GM10248 (cell line): ENCODE measurements at regions of chr10 and their contacts with region 1.

Region 1: DNA sequence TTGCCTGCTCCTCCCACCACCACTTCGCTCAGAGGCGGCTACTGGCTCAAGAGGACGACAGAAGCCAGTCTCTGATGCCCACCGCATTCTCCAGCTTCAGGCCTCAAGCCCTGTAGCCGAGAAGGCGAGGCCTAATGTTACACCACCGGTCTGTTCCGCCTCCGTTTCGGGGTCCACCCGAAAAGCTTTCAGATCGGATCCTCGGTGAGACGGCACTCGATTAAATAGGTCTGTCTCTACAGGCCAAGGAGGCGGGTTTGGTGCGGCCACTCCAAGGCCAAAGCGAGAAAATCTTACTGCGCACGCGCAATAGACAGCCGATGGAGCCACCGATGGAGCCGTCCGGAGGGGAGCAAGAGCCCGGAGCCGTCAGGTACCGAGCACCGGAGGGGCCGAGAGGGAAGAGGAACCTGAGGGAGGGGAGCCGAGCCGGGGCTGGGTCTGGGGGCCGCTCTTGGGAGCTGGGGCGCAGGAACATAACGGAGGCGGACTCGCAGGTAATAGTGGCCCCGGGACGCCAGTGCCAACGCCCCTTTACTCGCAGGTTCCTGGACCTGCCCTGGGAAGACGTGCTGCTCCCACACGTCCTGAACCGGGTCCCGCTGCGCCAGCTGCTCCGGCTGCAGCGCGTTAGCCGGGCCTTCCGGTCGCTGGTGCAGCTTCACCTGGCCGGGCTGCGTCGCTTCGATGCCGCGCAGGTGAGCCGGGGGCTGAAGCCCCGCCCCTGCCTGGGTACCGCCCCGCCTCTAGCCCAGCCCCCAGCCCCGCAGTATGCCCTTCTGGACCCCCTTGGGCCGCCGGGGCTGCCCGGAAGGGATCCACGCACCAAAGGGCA is at the start of gene FBXL15:
- DNase-seq: peak; percentile 96
- CTCF ChIP-seq: no peak

Region 2: GRCh38 chr10:102384053-102384452 is 37.0 kb before region 1 on chr10:
- CTCF ChIA-PET with region 1: interaction called, 18 read pairs
- POLR2A ChIA-PET with region 1: no interaction called
- DNase-seq: no peak
- CTCF ChIP-seq: no peak

Region 3: DNA sequence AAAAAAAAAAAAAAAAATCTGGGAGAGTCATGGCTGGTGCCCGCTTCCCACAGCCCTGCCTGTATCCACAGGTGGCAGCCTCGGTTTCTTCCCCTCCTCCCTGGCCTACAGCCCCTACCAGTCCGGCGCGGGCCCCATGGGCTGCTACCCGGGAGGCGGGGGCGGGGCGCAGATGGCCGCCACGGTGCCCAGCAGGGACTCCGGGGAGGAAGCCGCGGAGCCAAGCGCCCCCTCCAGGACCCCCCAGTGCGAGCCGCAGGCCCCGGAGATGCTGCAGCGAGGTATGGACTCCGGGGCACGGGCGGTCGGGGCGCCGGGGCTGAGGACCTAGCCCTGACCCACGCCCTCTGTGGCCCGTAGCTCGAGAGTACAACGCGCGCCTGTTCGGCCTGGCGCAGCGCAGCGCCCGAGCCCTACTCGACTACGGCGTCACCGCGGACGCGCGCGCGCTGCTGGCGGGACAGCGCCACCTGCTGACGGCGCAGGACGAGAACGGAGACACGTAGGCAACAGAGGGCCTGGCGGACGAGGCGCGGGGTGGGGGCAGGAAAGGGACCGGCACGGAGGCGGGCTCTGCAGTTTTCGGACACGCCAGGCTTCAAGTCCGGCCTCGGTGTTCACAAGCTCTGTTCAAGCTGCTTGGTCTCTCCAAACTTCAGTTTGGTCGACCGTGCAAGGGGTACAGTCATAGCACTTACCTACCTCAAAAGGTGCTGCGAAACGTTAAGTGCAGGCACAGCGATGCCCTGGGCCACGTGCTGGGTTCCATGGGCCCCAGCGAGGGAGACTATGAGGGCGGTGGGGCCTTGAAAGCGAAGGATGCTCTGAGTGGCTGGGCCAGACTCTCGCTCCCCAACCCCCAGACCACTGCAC is 21.6 kb before region 1 on chr10:
- CTCF ChIA-PET with region 1: interaction called, 140 read pairs
- POLR2A ChIA-PET with region 1: interaction called, 6 read pairs
- DNase-seq: peak; percentile 89
- CTCF ChIP-seq: peak; percentile 99

Region 4: DNA sequence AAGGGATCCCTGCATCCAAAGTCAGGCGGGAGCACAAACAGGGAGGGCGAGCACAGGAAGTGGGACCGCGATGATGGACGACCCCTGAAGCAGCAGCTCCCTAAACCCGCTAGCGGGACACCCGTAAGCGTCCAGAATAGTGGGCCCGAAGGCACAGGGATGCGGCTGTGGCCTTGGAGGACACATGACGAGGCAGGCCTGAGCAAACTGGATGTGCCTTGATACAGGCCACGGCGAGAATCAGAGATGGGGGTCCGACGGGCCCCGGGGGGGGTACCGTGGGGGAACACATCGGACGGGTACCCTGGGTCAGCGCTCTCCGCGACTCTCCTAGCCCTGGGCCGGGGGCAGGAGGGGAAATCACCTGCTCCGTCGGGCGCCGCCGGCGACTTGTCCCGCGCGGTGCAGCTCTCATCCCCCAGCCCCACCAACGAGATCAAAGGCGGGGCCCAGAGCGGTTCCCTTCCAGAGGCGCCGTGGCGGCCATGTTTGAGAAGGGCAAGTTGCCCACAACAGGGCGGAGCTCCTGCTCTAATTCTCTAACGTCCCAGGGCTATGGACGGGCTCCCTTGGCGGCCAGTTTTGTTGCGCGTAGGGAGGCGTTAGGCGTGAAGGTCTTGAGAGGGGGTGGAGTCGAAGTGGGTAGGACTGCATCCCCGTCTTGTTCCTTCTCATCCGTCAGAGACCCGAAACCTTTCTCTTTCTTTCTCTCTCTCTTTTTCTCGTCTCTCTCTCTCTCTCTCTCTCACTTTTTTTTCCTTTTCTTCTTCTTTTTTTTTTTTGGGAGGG is 11.3 kb after region 1 on chr10 and contains the start of gene CUEDC2:
- CTCF ChIA-PET with region 1: interaction called, 85 read pairs
- POLR2A ChIA-PET with region 1: interaction called, 4 read pairs
- DNase-seq: peak; percentile 94
- CTCF ChIP-seq: no peak

Region 5: DNA sequence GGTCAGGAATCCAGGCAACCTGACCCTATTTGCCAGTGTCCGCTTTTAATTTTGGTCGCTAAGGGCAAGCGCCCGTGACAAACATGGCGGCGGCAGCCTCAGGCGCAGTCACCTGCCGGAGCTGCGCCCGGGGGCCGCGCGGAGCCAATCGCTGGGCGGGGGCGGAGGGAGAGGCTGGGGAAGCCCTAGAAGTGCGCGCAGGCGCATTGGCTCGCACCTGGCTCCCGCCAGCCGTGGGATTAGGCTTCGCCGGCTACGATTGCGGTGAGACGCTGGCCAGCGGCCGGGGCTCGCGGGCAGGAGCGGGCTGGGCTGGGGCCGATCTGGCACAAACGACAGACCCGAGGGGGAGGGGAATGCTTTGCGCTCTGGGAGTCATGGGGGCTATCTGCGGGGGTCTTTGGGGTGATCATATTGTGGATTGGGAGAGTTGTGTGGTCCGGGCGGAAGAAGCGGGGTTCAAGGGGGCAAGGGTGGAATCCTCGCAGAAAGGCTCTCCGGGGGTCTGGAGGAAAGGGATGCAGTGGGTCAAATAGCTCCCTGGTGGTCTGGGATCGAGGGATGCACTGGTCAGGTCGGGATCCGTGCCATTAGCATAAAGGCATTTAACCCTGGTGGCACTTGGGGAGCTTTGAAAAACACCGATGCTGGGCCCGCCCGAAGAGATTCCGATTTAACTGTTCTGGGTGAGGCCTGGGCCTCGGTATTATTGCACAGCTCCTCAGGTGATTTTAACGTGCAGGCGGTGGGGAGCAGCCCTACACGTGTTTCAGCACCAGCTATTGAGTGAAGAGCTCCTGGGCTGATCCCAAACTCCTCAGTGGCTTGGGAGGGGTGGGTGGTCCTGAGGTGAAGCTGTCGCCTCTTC is 40.4 kb after region 1 on chr10:
- CTCF ChIA-PET with region 1: interaction called, 26 read pairs
- POLR2A ChIA-PET with region 1: no interaction called
- DNase-seq: peak; percentile 100
- CTCF ChIP-seq: no peak

Region 6: GRCh38 chr10:102540023-102540422 is 119.0 kb after region 1 on chr10:
- CTCF ChIA-PET with region 1: no interaction called
- POLR2A ChIA-PET with region 1: no interaction called
- DNase-seq: peak; percentile 43
- CTCF ChIP-seq: peak; percentile 23

Region 7: DNA sequence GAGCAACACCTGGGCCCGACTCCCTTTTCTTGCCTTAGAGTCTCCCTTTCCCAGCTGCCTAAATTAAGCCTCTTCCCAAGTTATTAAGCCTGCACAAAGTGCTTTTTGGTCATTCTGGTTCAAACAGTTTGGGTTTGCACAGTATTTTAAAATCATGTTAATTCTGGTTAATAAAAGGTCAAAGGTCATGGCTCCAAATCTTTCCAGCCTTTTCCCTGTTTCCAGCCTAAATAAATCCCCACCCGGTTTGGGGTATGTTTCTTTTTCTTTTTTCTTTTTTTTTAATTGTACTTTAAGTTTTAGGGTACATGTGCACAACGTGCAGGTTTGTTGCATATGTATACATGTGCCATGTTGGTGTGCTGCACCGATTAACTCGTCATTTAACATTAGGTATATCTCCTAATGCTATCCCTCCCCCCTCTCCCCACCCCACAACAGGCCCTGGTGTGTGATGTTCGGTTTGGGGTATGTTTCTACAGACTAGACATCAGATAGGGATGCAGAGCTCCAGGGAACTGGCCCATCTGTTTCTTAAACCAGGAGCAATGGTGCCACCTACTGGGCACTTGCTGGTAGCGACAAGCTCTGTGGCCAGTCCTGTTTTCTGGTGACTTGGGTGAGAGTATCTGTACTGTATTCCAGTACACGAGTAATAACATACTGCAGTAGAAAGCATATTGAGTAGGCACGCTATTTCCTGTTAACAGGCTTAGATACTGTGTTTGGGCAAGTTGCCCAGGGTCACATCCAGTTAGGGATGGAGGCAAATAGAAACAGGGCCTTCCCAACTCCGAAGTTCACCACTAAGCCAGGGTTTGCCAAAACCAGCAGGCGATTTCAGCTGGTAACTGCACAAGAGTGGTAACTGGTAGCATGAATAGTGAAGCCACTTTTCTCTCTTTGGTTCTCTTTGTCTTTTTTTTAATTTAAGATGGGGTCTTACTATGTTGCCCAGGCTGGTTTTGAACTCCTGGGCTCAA is 162.7 kb after region 1 on chr10:
- CTCF ChIA-PET with region 1: interaction called, 28 read pairs
- POLR2A ChIA-PET with region 1: no interaction called
- DNase-seq: peak; percentile 89
- CTCF ChIP-seq: peak; percentile 85